Mammary epithelial cell (primary cell): ENCODE measurements at regions of chr2 and their contacts with region 1.

Region 1: DNA sequence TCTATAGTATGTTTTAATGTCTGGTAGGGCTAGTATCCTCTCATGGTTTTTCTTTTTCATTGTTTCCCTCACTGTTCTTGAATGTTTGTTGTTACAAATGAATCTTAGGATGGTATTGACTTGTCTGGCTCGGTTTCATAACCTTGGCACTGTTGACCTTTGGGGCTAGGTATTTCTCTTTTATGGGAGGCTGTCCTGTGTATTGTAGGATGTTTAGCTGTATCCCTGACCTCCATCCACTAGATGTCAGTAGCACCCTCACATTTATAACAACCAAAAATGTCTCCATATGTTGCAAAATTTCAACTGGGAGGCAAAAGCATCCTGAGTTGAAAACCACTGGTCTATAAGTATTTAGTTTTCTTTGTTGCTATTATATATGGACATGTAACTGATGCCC is 7.0 kb upstream of the AOX1 start:
- DNase-seq: peak; percentile 25
- H3K4me3 ChIP-seq: no peak overlapping the region
- H3K27ac ChIP-seq: no peak overlapping the region
- H3K4me1 ChIP-seq: no peaks in the 10 kb centered on the region
- H3K27me3 ChIP-seq: no peaks in the 10 kb centered on the region
- CTCF ChIP-seq: peak; percentile 56 to 75

Region 2: GRCh38 chr2:199973703-199974102 is 605.1 kb before region 1 on chr2:
- CTCF ChIA-PET with region 1: no interaction called
- dilution Hi-C with region 1: no loop called
- in situ Hi-C with region 1: no loop called
- intact Hi-C with region 1: loop called (anchors 2 kb)
- DNase-seq: no peak
- H3K4me3 ChIP-seq: no peak overlapping the region
- H3K27ac ChIP-seq: no peak overlapping the region
- H3K4me1 ChIP-seq: peaks cover 8% of the 10 kb centered on the region
- H3K27me3 ChIP-seq: no peaks in the 10 kb centered on the region
- CTCF ChIP-seq: peak; percentile 40 to 54

Region 3: DNA sequence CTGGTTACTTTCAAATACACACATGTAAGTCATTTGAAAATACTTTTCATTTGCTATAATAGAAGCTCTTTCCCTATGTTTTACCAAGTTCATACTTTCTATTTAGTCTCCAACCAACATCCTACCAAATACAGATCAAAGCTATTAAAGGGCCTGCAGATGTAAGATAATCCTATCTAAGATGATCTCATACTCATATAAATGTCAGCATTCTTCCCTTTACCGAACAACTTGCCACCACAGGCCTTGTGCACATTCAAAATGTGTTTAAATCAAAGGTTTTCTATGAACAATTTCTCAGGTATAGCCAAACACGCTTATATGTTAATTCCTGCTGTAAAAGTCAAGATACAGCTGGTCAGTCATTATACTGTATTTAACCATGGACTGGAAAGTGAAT is 92.2 kb before region 1 on chr2:
- CTCF ChIA-PET with region 1: no interaction called
- dilution Hi-C with region 1: no loop called
- in situ Hi-C with region 1: no loop called
- intact Hi-C with region 1: no loop called
- DNase-seq: no peak
- H3K4me3 ChIP-seq: no peak overlapping the region
- H3K27ac ChIP-seq: no peak overlapping the region
- H3K4me1 ChIP-seq: peaks cover 13% of the 10 kb centered on the region
- H3K27me3 ChIP-seq: no peaks in the 10 kb centered on the region
- CTCF ChIP-seq: no peak

Region 4: GRCh38 chr2:200658278-200658864 is 79.6 kb after region 1 on chr2:
- CTCF ChIA-PET with region 1: no interaction called
- dilution Hi-C with region 1: no loop called
- in situ Hi-C with region 1: no loop called
- intact Hi-C with region 1: loop called (anchors 1 kb)
- DNase-seq: no peak
- H3K4me3 ChIP-seq: no peak overlapping the region
- H3K27ac ChIP-seq: no peak overlapping the region
- H3K4me1 ChIP-seq: peaks cover 15% of the 10 kb centered on the region
- H3K27me3 ChIP-seq: no peaks in the 10 kb centered on the region
- CTCF ChIP-seq: peak in 1 of 2 donors; percentile 27

Region 5: GRCh38 chr2:200703127-200703925 is 124.5 kb after region 1 on chr2:
- CTCF ChIA-PET with region 1: interaction called, 6 read pairs
- dilution Hi-C with region 1: no loop called
- in situ Hi-C with region 1: loop called (anchors 10 kb)
- intact Hi-C with region 1: loop called (anchors 1 kb)
- DNase-seq: peak; percentile 51
- H3K4me3 ChIP-seq: no peak overlapping the region
- H3K27ac ChIP-seq: no peak overlapping the region
- H3K4me1 ChIP-seq: no peaks in the 10 kb centered on the region
- H3K27me3 ChIP-seq: no peaks in the 10 kb centered on the region
- CTCF ChIP-seq: peak; percentile 49 to 56

Region 6: GRCh38 chr2:200725596-200725995 is 146.8 kb after region 1 on chr2:
- CTCF ChIA-PET with region 1: no interaction called
- dilution Hi-C with region 1: no loop called
- in situ Hi-C with region 1: no loop called
- intact Hi-C with region 1: no loop called
- DNase-seq: no peak
- H3K4me3 ChIP-seq: no peak overlapping the region
- H3K27ac ChIP-seq: no peak overlapping the region
- H3K4me1 ChIP-seq: no peaks in the 10 kb centered on the region
- H3K27me3 ChIP-seq: no peaks in the 10 kb centered on the region
- CTCF ChIP-seq: no peak

Region 7: DNA sequence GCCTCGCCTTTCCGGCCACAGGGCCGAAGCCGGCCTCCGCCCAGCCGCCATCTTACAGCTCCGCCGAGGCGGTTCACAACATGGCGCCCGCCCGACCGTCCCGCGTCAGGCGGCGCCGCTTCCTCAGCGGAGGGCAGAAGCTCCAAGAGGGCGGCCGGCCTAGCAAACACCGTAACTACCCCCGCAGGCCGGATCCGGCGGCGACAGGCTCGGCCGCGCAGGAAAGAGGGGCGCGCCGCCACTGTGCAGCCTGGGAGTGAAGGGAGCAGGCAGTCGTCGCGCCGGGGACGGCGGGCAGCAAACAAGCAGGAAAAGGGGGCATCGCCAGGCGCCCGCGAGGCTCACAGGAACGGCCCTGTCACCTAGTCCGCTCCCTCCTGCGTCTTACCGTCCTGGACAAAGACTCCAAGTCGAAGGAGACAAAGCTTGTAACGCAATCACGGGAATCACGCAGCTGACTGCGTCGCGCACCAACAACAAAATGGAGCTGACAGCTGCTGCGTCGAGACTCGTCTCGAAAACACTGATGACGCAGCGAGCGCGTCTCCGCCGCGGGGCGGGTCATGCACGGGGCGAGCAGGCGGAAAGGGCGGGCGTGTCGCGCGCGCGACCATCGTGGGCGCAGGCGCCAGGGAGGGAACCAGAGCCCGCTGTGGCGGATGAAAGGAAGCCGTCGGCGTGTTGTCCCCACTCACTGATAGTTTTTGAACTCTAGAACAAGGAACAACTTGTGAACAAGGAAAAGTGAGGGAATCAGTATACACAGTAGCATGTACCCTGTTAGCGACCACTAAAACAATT is 285.6 kb after region 1 on chr2 and contains the start of gene CLK1:
- CTCF ChIA-PET with region 1: no interaction called
- dilution Hi-C with region 1: no loop called
- in situ Hi-C with region 1: no loop called
- intact Hi-C with region 1: loop called (anchors 10 kb)
- DNase-seq: peak; percentile 92
- H3K4me3 ChIP-seq: peak within 1 kb of the TSS; percentile 82 to 100 (median 99)
- H3K27ac ChIP-seq: peak within 1 kb of the TSS; percentile 99
- H3K4me1 ChIP-seq: peaks cover 22% of the 10 kb centered on the region
- H3K27me3 ChIP-seq: no peaks in the 10 kb centered on the region
- CTCF ChIP-seq: no peak
- total RNA-seq, gene CLK1: 55.0 to 55.2 TPM

Region 8: GRCh38 chr2:200877443-200877842 is 298.7 kb after region 1 on chr2:
- CTCF ChIA-PET with region 1: no interaction called
- dilution Hi-C with region 1: no loop called
- in situ Hi-C with region 1: no loop called
- intact Hi-C with region 1: no loop called
- DNase-seq: no peak
- H3K4me3 ChIP-seq: no peak overlapping the region
- H3K27ac ChIP-seq: no peak overlapping the region
- H3K4me1 ChIP-seq: no peaks in the 10 kb centered on the region
- H3K27me3 ChIP-seq: no peaks in the 10 kb centered on the region
- CTCF ChIP-seq: no peak

Region 9: DNA sequence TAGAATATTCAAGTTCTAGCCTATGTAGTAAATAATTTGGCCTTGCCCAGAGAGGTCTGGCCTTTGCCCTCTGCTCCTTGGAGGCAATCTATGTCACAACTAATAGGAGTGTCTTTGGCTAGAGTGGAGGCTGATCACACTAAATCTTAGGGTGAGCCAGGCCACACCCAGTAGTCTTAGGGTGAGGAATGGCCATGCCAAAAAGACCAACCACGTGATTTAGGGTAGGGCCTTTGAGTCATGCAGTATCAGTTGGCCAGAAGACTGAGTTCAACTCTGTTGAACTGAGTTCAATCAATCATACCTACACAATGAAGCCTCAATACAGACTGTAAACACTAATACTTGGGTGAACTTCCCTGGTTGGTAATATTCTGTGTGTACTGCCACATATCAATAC is 804.4 kb after region 1 on chr2:
- CTCF ChIA-PET with region 1: no interaction called
- dilution Hi-C with region 1: no loop called
- in situ Hi-C with region 1: no loop called
- intact Hi-C with region 1: no loop called
- DNase-seq: peak; percentile 67
- H3K4me3 ChIP-seq: no peak overlapping the region
- H3K27ac ChIP-seq: peak overlapping the region; percentile 20
- H3K4me1 ChIP-seq: peaks cover 13% of the 10 kb centered on the region
- H3K27me3 ChIP-seq: no peaks in the 10 kb centered on the region
- CTCF ChIP-seq: no peak